ENCODE measurements at regions of chr11 and their contacts with region 1.

Region 1: GRCh38 chr11:121591405-121592033 is 138.8 kb upstream of the SORL1-AS1 start:
- DNase-seq: peak; percentile 66 to 88 (median 73)
- H3K4me3 ChIP-seq: no peak overlapping the region
- H3K27ac ChIP-seq: no peak overlapping the region
- H3K4me1 ChIP-seq: no peaks in the 10 kb centered on the region
- H3K27me3 ChIP-seq: no peaks in the 10 kb centered on the region
- CTCF ChIP-seq: peak; percentile 80 to 92 (median 88)
- POLR2A ChIP-seq: no peak

Region 2: DNA sequence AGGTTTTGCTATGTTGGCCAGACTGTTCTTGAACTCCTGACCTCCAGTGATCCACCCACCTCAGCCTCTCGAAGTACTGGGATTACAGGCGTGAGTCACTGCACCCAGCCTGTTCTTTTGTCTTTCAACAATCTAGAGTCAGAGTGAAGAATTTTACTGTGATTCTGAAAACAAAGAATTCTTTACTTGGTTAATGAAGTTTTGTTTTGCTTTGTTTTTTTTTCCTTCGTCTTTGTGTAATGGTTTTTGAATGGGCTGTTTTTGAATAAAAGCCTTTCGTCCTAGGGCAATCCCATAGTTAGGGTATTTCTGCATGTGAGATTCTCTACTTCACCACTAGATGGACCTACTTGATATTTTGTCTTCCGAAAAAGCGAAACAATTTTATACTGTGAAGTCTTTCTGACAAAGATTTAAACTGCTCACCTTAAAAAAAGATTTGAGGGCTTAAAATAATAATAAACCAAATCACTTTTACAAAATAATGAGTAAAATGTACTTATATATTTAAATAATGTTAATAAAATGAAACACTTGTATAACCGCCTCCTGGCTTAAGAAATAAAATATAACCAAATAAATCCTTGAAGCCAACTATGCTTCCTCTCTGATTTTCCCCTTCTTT is 342.4 kb before region 1 on chr11:
- intact Hi-C with region 1: loop called in 1 of 2 experiments (anchors 5 kb)
- DNase-seq: peak in 1 of 7 donors; percentile 24
- H3K4me3 ChIP-seq: no peak overlapping the region
- H3K27ac ChIP-seq: no peak overlapping the region
- H3K4me1 ChIP-seq: no peaks in the 10 kb centered on the region
- H3K27me3 ChIP-seq: no peaks in the 10 kb centered on the region
- CTCF ChIP-seq: peak; percentile 61 to 87 (median 74)
- POLR2A ChIP-seq: no peak

Region 3: GRCh38 chr11:121318848-121319834 is 272.4 kb before region 1 on chr11:
- intact Hi-C with region 1: loop called (anchors 5 to 10 kb)
- DNase-seq: peak in 4 of 7 donors; percentile 24 to 36 (median 31)
- H3K4me3 ChIP-seq: no peak overlapping the region
- H3K27ac ChIP-seq: no peak overlapping the region
- H3K4me1 ChIP-seq: no peaks in the 10 kb centered on the region
- H3K27me3 ChIP-seq: no peaks in the 10 kb centered on the region
- CTCF ChIP-seq: peak; percentile 57 to 90 (median 80)
- POLR2A ChIP-seq: no peak

Region 4: GRCh38 chr11:121451986-121452608 is 139.4 kb before region 1 on chr11 and contains the start of gene SORL1:
- intact Hi-C with region 1: loop called in 1 of 2 experiments (anchors 5 kb)
- DNase-seq: peak; percentile 62 to 79 (median 70)
- H3K4me3 ChIP-seq: peak within 1 kb of the TSS in 2 of 4 donors; percentile 59 to 69
- H3K27ac ChIP-seq: peak within 1 kb of the TSS in 1 of 5 donors; percentile 8
- H3K4me1 ChIP-seq: peaks cover 3 to 6% of the 10 kb centered on the region in 2 donors
- H3K27me3 ChIP-seq: no peaks in the 10 kb centered on the region
- CTCF ChIP-seq: peak in 4 of 6 experiments; percentile 48 to 72 (median 60)
- POLR2A ChIP-seq: peak in 1 of 2 donors; percentile 10
- total RNA-seq, gene SORL1: 2.5 to 28.6 (median 10.5) TPM

Region 5: GRCh38 chr11:121557348-121557747 is 34.2 kb before region 1 on chr11:
- intact Hi-C with region 1: no loop called
- DNase-seq: no peak
- H3K4me3 ChIP-seq: no peak overlapping the region
- H3K27ac ChIP-seq: no peak overlapping the region
- H3K4me1 ChIP-seq: no peaks in the 10 kb centered on the region
- H3K27me3 ChIP-seq: no peaks in the 10 kb centered on the region
- CTCF ChIP-seq: no peak
- POLR2A ChIP-seq: no peak

Region 6: GRCh38 chr11:121703201-121703600 is 111.7 kb after region 1 on chr11:
- intact Hi-C with region 1: no loop called
- DNase-seq: no peak
- H3K4me3 ChIP-seq: no peak overlapping the region
- H3K27ac ChIP-seq: no peak overlapping the region
- H3K4me1 ChIP-seq: no peaks in the 10 kb centered on the region
- H3K27me3 ChIP-seq: no peaks in the 10 kb centered on the region
- CTCF ChIP-seq: no peak
- POLR2A ChIP-seq: no peak

Measured in adrenal gland (tissue), 19 donors.